WTC11 (cell line): ENCODE measurements at regions of chr3 and their contacts with region 1.

Region 1: GRCh38 chr3:48997714-48998641 is 7.9 kb downstream of the P4HTM start:
- DNase-seq: peak; percentile 65
- ATAC-seq: peak; percentile 11
- H3K4me3 Mint-ChIP-seq: no peak overlapping the region
- H3K27ac Mint-ChIP-seq: no peak overlapping the region
- H3K4me1 Mint-ChIP-seq: peaks cover 12% of the 10 kb centered on the region
- H3K27me3 Mint-ChIP-seq: no peaks in the 10 kb centered on the region
- CTCF ChIP-seq: no peak

Region 2: GRCh38 chr3:48885753-48886152 is 112.2 kb before region 1 on chr3:
- CTCF ChIA-PET with region 1: no interaction called
- POLR2A ChIA-PET with region 1: no interaction called
- DNase-seq: no peak
- ATAC-seq: no peak
- H3K4me3 Mint-ChIP-seq: no peak overlapping the region
- H3K27ac Mint-ChIP-seq: peak overlapping the region; percentile 74; the same call in 1 of the 2 replicates
- H3K4me1 Mint-ChIP-seq: no peaks in the 10 kb centered on the region
- H3K27me3 Mint-ChIP-seq: no peaks in the 10 kb centered on the region
- CTCF ChIP-seq: no peak

Region 3: DNA sequence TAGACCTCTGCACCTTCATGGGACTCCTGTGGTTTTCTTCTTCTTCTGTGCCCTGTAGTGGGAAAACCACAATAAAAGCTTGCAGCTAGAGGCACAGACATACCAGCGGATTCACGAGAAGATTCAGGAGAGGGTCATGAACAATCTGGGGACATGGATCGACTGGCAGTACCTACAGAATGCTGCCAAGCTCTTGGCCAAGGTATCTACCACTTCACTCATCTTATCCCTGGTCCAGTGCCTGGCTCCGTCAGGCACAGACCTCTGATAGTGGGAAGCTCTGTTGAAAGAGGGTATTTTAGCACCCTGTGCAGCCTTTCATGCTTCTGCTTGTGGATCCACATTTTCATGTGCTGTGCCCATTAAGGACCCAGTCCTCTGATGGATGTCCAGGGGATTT is 17.7 kb before region 1 on chr3:
- CTCF ChIA-PET with region 1: no interaction called
- POLR2A ChIA-PET with region 1: no interaction called
- DNase-seq: no peak
- ATAC-seq: no peak
- H3K4me3 Mint-ChIP-seq: no peak overlapping the region
- H3K27ac Mint-ChIP-seq: no peak overlapping the region
- H3K4me1 Mint-ChIP-seq: no peaks in the 10 kb centered on the region
- H3K27me3 Mint-ChIP-seq: no peaks in the 10 kb centered on the region
- CTCF ChIP-seq: no peak

Region 4: DNA sequence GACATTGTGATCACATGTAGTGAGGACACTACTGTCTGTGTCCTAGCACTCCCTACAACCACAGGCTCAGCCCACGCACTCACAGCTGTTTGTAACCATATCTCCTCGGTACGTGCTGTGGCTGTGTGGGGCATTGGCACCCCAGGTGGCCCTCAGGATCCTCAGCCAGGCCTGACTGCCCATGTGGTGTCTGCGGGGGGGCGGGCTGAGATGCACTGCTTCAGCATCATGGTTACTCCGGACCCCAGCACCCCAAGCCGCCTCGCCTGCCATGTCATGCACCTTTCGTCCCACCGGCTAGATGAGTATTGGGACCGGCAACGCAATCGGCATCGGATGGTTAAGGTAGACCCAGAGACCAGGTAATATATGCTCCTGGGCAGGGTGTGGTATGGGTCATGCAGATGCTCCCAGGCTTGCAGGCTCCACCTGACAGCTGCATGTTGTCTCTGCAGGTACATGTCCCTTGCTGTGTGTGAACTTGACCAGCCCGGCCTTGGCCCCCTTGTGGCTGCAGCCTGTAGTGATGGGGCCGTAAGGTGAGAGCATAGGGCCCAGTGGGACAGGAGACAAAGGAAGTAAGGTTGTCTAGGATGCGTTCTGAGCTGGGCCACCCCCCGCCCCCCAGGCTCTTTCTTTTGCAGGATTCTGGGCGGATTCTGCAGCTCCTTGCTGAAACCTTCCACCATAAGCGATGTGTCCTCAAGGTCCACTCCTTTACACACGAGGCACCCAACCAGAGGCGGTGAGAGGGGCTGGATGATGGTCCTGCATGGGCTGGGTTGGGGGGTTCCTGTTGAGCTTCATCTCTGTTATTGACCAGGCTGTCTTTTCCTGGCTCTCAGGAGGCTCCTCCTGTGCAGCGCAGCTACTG is 16.0 kb after region 1 on chr3:
- CTCF ChIA-PET with region 1: interaction called, 12 read pairs
- POLR2A ChIA-PET with region 1: interaction called, 6 read pairs
- DNase-seq: peak; percentile 85
- ATAC-seq: peak; percentile 72
- H3K4me3 Mint-ChIP-seq: no peak overlapping the region
- H3K27ac Mint-ChIP-seq: no peak overlapping the region
- H3K4me1 Mint-ChIP-seq: peaks cover 11% of the 10 kb centered on the region
- H3K27me3 Mint-ChIP-seq: no peaks in the 10 kb centered on the region
- CTCF ChIP-seq: peak; percentile 78

Region 5: DNA sequence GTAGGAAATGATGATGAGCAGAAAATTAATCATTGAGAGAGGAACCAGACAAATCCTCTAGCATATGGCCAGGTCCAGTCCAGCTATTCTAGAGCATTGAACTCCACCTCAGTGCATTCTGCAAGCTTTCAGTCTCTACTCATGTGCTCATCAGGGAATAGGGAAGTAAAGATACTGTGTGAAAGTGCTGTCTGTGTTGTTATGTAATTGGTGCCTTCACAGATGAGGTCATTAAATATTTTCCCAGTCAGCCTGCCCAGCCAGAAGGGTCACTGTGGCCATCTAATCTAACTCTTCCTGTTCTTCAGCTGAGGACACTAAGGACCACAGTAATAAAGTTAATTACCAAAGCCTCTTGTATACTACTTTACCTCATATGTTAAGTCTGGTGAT is 250.9 kb after region 1 on chr3:
- CTCF ChIA-PET with region 1: no interaction called
- POLR2A ChIA-PET with region 1: no interaction called
- DNase-seq: no peak
- ATAC-seq: no peak
- H3K4me3 Mint-ChIP-seq: no peak overlapping the region
- H3K27ac Mint-ChIP-seq: no peak overlapping the region; the same call in 1 of the 2 replicates
- H3K4me1 Mint-ChIP-seq: no peaks in the 10 kb centered on the region
- H3K27me3 Mint-ChIP-seq: no peaks in the 10 kb centered on the region
- CTCF ChIP-seq: no peak